ENCODE measurements at regions of chr19 and their contacts with region 1.

Region 1: GRCh38 chr19:33143897-33144405 is 12.0 kb downstream of the WDR88 start:
- DNase-seq: peak; percentile 76
- ATAC-seq: peak; percentile 93

Region 2: GRCh38 chr19:33176670-33177416 is 32.9 kb after region 1 on chr19:
- intact Hi-C with region 1: loop called (anchors 2 kb)
- DNase-seq: peak; percentile 99
- ATAC-seq: peak; percentile 95

Region 3: DNA sequence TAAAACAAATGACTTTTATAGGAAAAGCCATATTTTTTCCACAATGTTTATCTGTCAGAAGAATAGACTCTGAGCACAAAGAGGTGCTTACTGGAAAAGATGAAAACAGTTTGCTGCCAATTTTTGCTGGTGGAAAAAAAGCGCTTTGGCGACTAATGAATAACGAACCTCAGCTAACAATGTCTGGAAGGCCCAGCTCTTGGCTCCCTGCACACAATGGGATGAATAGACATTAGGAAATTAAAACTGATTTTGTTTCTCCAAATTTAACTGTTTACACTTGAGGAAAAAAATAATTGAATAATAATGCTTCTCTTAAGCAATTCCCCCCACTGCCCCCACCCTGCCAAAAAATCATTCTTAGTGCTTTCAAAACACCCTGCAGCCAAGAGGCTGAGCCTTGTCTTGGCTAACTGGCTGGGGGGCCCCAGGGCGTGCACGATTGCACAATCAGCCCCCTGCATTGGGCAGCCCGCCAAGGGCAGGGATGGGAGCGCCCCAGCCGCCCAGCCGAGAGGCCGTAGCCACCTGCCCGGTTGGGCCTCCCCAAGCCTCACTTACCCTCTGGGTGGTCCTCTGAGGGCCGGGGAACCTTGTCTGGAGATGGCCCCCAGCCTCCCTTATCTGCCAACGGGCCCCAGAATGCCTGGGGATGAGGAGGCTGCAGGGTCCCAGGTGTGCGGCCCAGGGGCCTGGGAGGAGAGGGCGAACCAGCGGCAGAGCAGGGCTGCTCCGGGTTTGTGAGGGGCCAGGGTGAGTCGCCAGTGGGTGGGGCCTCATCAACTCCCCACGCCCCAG is 246.4 kb after region 1 on chr19:
- intact Hi-C with region 1: no loop called
- DNase-seq: peak; percentile 83
- ATAC-seq: peak; percentile 35

Measured in Right ventricle myocardium inferior (tissue), 1 donor.